ENCODE measurements at regions of chr16 and their contacts with region 1.

Region 1: DNA sequence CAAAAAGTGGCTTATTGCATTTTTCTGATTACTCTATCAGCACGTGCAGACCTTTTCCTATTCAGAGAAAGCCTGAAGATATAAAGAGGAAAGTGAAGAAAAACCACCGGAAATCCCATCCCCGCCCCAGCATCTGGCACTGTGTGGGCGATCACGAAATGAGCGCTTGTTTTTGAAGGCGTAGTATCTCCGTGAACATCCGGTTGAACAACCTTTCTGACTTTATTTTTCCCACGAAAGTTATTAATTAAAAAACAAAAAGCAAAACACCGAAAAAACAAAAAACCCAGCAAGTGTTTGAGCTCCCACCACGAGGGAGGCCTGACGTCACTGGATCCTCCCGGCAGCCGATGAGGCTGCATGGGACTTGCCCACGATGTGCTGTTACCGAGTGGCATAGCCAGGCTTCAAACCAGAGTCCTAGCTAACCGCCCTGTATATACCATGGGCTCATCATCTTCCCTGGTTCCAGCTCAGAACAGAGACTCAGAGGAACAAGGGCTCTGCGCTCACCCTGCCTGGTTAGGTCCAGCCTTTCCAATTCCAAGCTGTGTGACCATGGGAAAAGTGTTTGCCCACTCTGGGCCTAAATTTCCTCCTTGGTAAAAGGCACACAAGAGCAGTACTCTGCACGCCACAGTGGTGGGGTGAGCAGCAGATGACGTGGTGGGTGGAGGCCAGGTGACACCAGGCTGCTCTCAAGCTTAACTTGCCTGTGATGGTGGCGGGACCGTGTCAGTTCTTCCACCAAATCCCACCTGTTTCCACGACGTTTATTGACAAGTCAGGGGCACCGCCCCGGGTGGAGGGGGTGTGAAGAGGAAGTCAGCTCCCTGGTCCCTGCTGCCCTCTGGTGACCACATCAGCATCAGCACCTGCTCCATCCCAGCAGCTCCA is 34.3 kb upstream of the IL21R start:
- DNase-seq: peak; percentile 85
- H3K4me3 ChIP-seq: no peak overlapping the region
- H3K27ac ChIP-seq: no peak overlapping the region
- H3K4me1 ChIP-seq: no peaks in the 10 kb centered on the region; a peak in 1 of 4 replicates
- H3K27me3 ChIP-seq: no peaks in the 10 kb centered on the region
- CTCF ChIP-seq: peak; percentile 68
- EP300 ChIP-seq: no peak
- RAD21 ChIP-seq: peak; percentile 81

Region 2: DNA sequence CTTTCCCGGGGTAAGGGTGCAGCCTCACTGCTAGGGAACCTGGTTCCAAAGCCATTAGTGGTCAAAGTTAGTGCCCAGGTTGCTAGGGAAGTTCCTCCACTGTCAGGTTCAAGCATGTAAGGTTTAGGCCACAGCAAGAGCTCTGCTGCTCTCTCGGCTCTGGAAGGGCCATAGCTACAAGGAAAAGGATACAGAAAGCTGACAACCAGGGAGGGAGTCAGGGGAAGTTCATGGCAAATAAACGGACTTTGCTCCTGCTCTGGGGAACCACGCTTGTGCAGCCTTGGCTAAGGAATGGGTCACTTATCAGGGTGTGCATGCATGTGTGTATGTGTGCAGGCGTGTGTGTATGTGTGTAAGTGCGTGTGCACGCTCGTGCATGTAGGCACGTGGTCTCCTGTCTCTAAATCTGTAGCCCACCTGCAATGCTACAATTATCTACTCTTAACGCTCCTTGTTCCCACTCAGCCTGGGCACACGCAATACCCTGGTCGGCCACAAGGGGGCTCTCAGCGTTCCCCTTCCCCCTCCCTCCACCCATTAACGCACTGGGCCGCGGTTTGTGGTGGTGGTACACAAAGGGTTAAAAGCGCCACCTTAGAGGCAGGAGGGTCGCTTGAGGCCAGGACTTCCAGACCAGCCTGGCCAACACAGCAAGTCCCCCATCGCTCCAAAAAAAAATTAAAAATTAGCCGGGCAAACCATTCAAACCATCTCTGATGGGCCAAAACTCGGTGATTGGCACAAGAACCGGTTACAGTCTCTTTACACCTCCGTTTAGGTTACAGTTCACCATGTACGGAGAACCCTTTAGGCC is 212.8 kb before region 1 on chr16:
- CTCF ChIA-PET with region 1: interaction called, 10 read pairs
- POLR2A ChIA-PET with region 1: no interaction called
- DNase-seq: peak; percentile 77
- H3K4me3 ChIP-seq: peak overlapping the region in 1 of 2 experiments; percentile 34; a peak in 1 of 4 replicates
- H3K27ac ChIP-seq: no peak overlapping the region
- H3K4me1 ChIP-seq: peaks cover 0 to 32% of the 10 kb centered on the region in 2 experiments; a peak in 1 of 4 replicates
- H3K27me3 ChIP-seq: no peaks in the 10 kb centered on the region
- CTCF ChIP-seq: peak; percentile 97
- EP300 ChIP-seq: no peak
- RAD21 ChIP-seq: peak; percentile 65

Region 3: DNA sequence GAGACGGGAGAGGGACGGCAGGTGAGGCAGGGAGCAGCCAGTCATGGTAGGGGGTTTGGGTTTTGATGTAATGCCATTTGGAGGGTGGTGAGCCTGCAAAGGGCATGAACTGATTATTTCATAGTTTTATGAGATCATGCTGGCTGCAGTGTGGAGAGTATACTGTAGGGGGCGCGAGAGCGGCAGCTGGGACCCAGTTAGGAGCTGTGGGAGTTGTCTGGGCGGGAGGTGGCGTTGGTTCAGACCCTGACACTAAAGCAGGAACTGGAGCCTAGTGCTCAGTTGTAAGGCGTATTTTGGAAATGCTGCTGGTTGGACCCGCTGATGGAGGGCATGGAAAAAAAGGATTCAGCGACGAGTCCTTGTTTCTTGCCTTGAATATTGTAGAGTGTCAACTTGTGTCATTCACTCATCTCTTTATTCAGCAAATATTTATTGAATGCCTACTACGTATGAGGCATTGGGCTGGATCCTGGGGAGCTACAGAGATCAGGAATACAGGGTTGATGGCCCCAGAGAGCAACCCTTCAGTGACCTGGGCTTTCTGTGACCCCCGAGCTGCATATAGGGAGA is 188.1 kb before region 1 on chr16:
- CTCF ChIA-PET with region 1: interaction called, 72 read pairs
- POLR2A ChIA-PET with region 1: no interaction called
- DNase-seq: peak; percentile 77
- H3K4me3 ChIP-seq: no peak overlapping the region; a peak in 1 of 4 replicates
- H3K27ac ChIP-seq: no peak overlapping the region
- H3K4me1 ChIP-seq: peaks cover 0 to 5% of the 10 kb centered on the region in 2 experiments; a peak in 2 of 4 replicates
- H3K27me3 ChIP-seq: no peaks in the 10 kb centered on the region
- CTCF ChIP-seq: peak; percentile 75
- EP300 ChIP-seq: no peak
- RAD21 ChIP-seq: peak; percentile 78

Region 4: DNA sequence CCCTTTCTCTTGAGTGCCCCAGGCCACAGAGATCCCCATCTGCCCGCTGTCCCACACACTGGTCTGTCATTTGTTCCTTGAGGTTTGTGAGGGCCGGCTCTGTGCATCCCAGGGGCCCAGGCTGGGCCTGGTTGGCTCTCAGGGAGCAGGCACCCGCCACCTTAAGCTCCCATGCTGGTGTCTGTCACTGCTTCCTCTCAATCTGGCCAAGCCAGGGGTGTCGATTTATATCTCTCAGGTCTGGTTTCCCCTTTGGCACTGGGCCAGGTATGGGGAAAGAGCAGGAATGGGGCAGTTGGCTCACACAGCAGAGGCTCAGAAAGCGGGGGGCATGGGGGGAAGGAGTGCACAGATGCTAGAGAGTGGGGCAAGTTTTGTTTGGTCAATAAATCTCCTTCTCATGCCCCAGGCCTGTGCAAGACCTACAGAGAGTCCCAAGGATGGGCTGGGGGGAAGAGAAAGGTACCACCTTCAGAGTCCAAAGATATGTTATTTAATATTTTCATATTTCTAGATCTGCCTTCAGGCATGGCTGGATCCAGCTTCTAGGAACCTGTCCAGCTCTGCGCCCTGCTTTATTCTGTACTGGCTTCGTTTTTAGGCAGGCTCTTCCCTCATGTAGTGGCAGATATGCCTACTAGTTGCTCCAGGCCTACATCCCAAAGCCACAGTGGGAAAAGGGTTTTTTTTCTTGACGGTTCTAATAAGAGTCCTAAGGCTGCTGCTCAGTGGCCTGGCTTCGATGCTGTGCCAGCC is 19.6 kb before region 1 on chr16:
- CTCF ChIA-PET with region 1: interaction called, 10 read pairs
- POLR2A ChIA-PET with region 1: no interaction called
- DNase-seq: peak; percentile 73
- H3K4me3 ChIP-seq: no peak overlapping the region
- H3K27ac ChIP-seq: no peak overlapping the region
- H3K4me1 ChIP-seq: peaks cover 0 to 7% of the 10 kb centered on the region in 2 experiments; a peak in 1 of 4 replicates
- H3K27me3 ChIP-seq: no peaks in the 10 kb centered on the region
- CTCF ChIP-seq: no peak
- EP300 ChIP-seq: no peak
- RAD21 ChIP-seq: no peak

Region 5: GRCh38 chr16:27355610-27356009 is 12.1 kb before region 1 on chr16:
- CTCF ChIA-PET with region 1: interaction called, 21 read pairs
- POLR2A ChIA-PET with region 1: no interaction called
- DNase-seq: no peak
- H3K4me3 ChIP-seq: no peak overlapping the region
- H3K27ac ChIP-seq: no peak overlapping the region
- H3K4me1 ChIP-seq: no peaks in the 10 kb centered on the region
- H3K27me3 ChIP-seq: no peaks in the 10 kb centered on the region
- CTCF ChIP-seq: peak; percentile 50
- EP300 ChIP-seq: no peak
- RAD21 ChIP-seq: peak; percentile 32; the same call in 1 of the 2 replicates

Region 6: GRCh38 chr16:27439273-27440018 is 71.7 kb after region 1 on chr16:
- CTCF ChIA-PET with region 1: no interaction called
- POLR2A ChIA-PET with region 1: no interaction called
- DNase-seq: peak; percentile 12
- H3K4me3 ChIP-seq: no peak overlapping the region
- H3K27ac ChIP-seq: no peak overlapping the region
- H3K4me1 ChIP-seq: peaks cover 0 to 5% of the 10 kb centered on the region in 2 experiments; a peak in 1 of 4 replicates
- H3K27me3 ChIP-seq: no peaks in the 10 kb centered on the region
- CTCF ChIP-seq: no peak
- EP300 ChIP-seq: no peak
- RAD21 ChIP-seq: no peak

Region 7: GRCh38 chr16:27463741-27464591 is 96.3 kb after region 1 on chr16:
- CTCF ChIA-PET with region 1: no interaction called
- POLR2A ChIA-PET with region 1: no interaction called
- DNase-seq: no peak
- H3K4me3 ChIP-seq: no peak overlapping the region
- H3K27ac ChIP-seq: no peak overlapping the region
- H3K4me1 ChIP-seq: no peaks in the 10 kb centered on the region
- H3K27me3 ChIP-seq: no peaks in the 10 kb centered on the region
- CTCF ChIP-seq: no peak
- EP300 ChIP-seq: no peak
- RAD21 ChIP-seq: no peak

Measured in SK-N-SH (cell line).